ENCODE measurements at regions of chr12 and their contacts with region 1.

Region 1: DNA sequence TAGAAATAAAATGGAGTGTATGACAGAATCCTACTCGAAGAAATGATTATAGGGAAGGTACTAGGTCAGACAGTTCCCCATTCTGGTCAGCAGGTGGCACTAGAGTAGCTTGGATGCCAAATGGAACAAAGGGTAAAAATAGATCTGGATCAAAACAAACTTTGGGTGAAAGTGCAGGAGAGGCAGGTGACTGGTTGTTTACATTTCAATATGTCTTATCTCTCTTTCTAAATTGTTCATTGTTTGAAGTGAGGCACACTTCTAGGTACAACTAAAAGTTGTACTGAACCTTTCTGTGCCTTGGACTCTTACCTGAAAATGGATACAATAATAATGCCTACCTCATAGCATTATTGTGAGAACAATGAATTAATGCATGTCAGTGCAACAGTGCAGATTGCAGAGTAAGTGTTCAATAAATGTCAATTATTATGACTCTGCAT is 62.0 kb upstream of the OSBPL8 start:
- DNase-seq: peak; percentile 81

Region 2: DNA sequence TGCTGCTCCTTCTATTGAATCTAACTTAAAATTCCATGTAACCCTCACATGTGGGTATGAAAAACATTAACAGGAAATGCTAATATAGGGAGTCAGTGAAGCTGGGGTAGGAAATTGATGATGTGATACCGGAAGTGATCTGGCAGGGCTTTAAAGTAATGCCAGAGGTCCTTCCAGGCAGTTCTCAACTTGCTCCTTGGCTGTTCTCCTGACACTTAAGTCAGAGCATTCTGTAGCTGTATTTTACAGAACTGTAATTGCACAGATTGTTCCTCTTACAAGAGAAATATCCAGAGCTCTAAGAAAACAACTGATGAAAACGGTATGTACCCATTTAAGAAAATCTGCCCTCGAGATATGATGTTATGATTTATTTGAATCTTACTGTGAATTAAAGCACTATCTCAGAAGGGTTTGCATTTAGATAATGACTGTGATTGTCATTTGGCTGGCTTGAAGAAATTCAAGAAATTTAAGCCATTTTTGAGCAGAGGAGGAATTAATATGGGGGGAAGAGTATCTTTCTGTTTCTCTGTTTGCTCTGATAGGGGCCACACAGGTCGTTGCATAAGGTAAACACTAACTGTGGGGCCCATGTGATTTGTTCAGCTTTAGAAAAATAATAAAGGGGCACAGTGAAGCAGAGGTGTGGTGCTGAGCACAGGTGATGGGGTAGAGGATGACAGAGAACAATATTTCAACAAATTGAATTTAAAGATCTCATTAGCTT is 361.8 kb before region 1 on chr12:
- in situ Hi-C with region 1: no loop called
- DNase-seq: no peak

Region 3: GRCh38 chr12:76790564-76791552 is 169.3 kb after region 1 on chr12:
- in situ Hi-C with region 1: loop called (anchors 25 kb)
- DNase-seq: peak; percentile 46